ENCODE measurements at regions of chr12 and their contacts with region 1.

Region 1: DNA sequence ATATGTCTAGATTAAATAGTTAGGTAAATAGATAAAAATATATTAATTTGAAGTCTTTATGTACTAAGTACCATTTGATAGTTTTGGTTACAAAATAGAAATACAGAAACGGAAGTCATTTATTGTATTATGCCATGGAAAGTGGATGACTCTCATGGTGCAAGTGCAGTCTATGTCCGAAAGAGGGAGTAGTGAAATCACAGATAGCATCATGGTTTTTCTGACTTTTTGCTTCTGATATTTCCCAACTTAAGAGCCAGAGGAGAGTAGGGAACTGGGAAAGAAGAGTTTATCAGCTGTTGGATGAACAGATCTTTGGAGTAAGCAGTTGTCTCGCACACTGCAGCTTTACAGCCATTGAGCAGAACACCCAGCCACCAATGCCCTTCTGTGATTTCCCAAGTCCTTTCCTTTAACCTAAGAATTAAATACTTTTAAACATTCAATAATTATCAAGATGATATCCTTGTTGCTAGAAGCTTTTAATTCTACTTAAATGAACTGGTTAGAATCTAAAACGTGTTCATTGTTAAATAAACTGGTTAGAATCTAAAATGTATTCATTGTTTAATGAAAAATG is 18.4 kb upstream of the SRGAP1 start:
- DNase-seq: peak; percentile 66
- ATAC-seq: peak; percentile 91
- H3K4me3 ChIP-seq: no peak overlapping the region
- H3K27ac ChIP-seq: no peak overlapping the region
- H3K4me1 ChIP-seq: no peaks in the 10 kb centered on the region
- H3K27me3 ChIP-seq: no peaks in the 10 kb centered on the region
- CTCF ChIP-seq: peak; percentile 82 to 84 (median 83)
- POLR2A ChIP-seq: no peak
- RAD21 ChIP-seq: peak; percentile 91

Region 2: DNA sequence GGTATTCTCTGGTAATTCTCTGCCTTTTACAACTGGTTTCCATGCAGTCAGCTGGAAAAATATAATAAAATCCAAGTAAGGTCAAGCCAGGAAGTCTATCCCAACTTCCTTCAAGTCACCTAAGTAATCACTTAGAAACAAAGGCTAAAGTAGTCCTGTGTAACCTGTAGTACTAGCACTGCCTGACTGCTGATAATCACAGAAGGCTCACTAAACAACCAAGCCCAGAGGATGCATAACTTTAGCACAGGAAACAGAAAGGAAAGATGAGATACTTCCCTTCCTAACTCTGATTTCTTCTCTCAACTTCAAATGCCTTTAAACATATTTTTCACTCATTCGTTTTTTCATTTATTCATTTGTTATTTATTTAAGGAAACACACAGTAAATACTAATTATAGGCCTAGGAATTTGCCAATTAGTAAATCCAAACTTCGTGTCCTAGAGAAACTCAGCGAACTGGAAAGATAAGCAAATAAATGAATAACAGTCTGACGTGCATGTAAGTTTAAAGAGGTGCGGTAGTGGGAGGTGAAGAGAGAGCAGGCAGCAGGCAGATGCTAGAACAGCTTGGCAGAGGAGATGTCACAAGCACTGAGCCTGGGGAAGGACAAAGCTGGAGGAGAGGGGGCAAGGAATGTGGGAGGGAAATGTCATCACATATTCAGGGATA is 386.2 kb before region 1 on chr12:
- CTCF ChIA-PET with region 1: no interaction called
- POLR2A ChIA-PET with region 1: no interaction called
- RAD21 ChIA-PET with region 1: no interaction called
- intact Hi-C with region 1: no loop called
- DNase-seq: no peak
- ATAC-seq: no peak
- H3K4me3 ChIP-seq: no peak overlapping the region
- H3K27ac ChIP-seq: no peak overlapping the region
- H3K4me1 ChIP-seq: no peaks in the 10 kb centered on the region
- H3K27me3 ChIP-seq: no peaks in the 10 kb centered on the region
- CTCF ChIP-seq: no peak
- POLR2A ChIP-seq: no peak
- RAD21 ChIP-seq: no peak

Region 3: DNA sequence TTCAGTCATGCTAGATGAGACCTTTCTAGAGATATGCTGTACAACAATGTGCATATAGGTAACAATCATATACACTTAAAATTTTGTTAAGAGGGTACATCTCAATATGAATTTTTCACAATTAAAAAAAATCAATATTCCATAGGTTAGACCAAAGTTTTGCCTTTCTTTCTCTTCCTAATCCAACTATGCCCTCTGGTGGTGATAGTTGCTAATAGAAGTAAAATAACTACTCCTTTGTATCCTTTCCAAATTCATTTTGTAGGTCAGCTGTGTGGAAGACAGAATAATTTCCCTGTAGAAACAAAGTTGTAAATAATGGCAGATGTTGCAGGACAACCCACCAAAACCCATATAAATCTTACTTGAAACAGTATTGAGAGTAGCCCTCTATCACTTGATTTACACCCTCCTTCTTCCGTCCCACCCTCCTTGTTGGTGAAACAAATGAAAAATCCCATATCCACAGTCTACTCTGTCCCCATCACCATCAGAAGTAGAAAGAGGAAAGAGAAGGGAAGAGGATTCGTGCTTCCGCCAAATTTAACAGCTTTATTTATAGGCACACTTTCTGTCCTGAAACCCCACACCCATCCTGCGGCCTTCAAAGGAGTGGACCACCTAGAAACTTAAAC is 430.2 kb after region 1 on chr12:
- CTCF ChIA-PET with region 1: interaction called, 16 read pairs
- POLR2A ChIA-PET with region 1: no interaction called
- RAD21 ChIA-PET with region 1: no interaction called
- intact Hi-C with region 1: loop called (anchors 1 kb)
- DNase-seq: peak; percentile 33
- ATAC-seq: peak; percentile 47; the same call in 1 of the 2 replicates
- H3K4me3 ChIP-seq: no peak overlapping the region
- H3K27ac ChIP-seq: no peak overlapping the region
- H3K4me1 ChIP-seq: no peaks in the 10 kb centered on the region
- H3K27me3 ChIP-seq: no peaks in the 10 kb centered on the region
- CTCF ChIP-seq: peak; percentile 42 to 94 (median 84); a peak in 5 of 6 replicates
- POLR2A ChIP-seq: no peak
- RAD21 ChIP-seq: peak; percentile 97

Region 4: DNA sequence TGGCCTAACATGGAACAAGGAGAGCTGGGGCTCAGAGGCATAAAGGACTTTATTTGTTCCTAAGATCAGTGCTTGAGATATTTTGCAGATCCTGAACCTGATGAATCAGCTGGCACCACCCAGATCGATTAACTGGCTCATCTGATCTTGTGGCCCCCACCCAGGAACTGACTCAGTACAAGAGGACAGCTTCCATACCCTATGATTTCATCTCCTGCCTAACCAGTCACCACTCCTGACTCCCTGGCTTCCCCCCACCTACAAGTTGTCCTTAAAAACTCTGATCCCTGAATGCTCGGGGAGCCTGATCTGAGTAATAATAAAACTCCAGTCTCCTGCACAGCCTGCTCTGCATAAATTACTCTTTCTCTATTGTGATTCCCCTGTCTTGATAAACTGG is 559.4 kb after region 1 on chr12:
- CTCF ChIA-PET with region 1: no interaction called
- POLR2A ChIA-PET with region 1: no interaction called
- RAD21 ChIA-PET with region 1: no interaction called
- intact Hi-C with region 1: loop called (anchors 5 kb)
- DNase-seq: peak; percentile 47
- ATAC-seq: peak; percentile 71
- H3K4me3 ChIP-seq: no peak overlapping the region
- H3K27ac ChIP-seq: no peak overlapping the region
- H3K4me1 ChIP-seq: peaks cover 0 to 18% of the 10 kb centered on the region in 2 experiments; a peak in 2 of 4 replicates
- H3K27me3 ChIP-seq: no peaks in the 10 kb centered on the region
- CTCF ChIP-seq: no peak
- POLR2A ChIP-seq: no peak
- RAD21 ChIP-seq: no peak

Region 5: GRCh38 chr12:64759035-64759901 is 933.2 kb after region 1 on chr12 and contains the start of gene GNS:
- CTCF ChIA-PET with region 1: no interaction called
- POLR2A ChIA-PET with region 1: no interaction called
- RAD21 ChIA-PET with region 1: no interaction called
- intact Hi-C with region 1: loop called (anchors 10 kb)
- DNase-seq: peak; percentile 77
- ATAC-seq: peak; percentile 96
- H3K4me3 ChIP-seq: peak within 1 kb of the TSS; percentile 74 to 87
- H3K27ac ChIP-seq: peak within 1 kb of the TSS; percentile 47
- H3K4me1 ChIP-seq: peaks cover 9 to 18% of the 10 kb centered on the region in 2 experiments; a peak in 3 of 4 replicates
- H3K27me3 ChIP-seq: no peaks in the 10 kb centered on the region
- CTCF ChIP-seq: no peak
- POLR2A ChIP-seq: no peak
- RAD21 ChIP-seq: no peak
- total RNA-seq, gene GNS: 45.7 TPM

Measured in HCT116 (cell line).